ENCODE measurements at regions of chr1 and their contacts with region 1.

Region 1: GRCh38 chr1:67489643-67490042 is 59.4 kb upstream of the SERBP1 start:
- DNase-seq: peak; percentile 36
- ATAC-seq: peak; percentile 96
- H3K4me3 ChIP-seq: no peak overlapping the region
- H3K27ac ChIP-seq: no peak overlapping the region
- H3K4me1 ChIP-seq: no peaks in the 10 kb centered on the region
- H3K27me3 ChIP-seq: no peaks in the 10 kb centered on the region; a peak in 1 of 5 replicates
- CTCF ChIP-seq: peak; percentile 63
- EP300 ChIP-seq: no peak
- POLR2A ChIP-seq: no peak
- RAD21 ChIP-seq: no peak

Region 2: DNA sequence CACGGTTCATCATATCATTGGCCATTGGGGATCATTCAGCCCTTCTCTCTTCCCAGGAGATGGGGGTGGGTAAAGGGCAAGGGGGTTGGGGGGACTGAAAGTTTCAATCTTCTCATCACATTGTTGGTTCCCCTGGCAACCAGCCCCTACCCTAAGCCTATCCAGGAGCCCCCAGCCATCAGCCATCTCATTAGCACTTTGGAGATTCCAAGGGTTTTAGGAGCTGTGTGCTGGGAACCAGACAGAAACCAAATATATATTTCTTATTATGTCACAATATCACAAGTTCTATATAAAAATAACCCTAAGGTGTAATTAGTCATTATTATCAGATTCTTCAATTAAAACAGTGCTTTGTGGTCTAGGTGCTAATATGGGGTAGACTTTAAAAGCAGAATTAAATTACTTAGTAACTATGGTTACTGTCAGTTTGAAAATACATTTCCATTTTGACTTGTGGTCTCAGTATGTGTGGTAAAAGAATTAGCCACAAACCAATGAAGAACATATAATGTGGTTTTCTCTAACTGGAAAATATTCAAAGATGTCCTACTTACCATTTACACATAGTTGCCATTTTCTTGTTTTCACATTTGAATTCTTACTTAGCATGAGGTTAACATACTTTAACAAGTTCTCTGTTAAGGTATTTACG is 295.3 kb before region 1 on chr1:
- CTCF ChIA-PET with region 1: no interaction called
- POLR2A ChIA-PET with region 1: no interaction called
- in situ Hi-C with region 1: no loop called
- intact Hi-C with region 1: no loop called
- DNase-seq: no peak
- ATAC-seq: no peak
- H3K4me3 ChIP-seq: no peak overlapping the region
- H3K27ac ChIP-seq: no peak overlapping the region
- H3K4me1 ChIP-seq: no peaks in the 10 kb centered on the region
- H3K27me3 ChIP-seq: no peaks in the 10 kb centered on the region
- CTCF ChIP-seq: no peak
- EP300 ChIP-seq: no peak
- POLR2A ChIP-seq: no peak
- RAD21 ChIP-seq: no peak

Region 3: DNA sequence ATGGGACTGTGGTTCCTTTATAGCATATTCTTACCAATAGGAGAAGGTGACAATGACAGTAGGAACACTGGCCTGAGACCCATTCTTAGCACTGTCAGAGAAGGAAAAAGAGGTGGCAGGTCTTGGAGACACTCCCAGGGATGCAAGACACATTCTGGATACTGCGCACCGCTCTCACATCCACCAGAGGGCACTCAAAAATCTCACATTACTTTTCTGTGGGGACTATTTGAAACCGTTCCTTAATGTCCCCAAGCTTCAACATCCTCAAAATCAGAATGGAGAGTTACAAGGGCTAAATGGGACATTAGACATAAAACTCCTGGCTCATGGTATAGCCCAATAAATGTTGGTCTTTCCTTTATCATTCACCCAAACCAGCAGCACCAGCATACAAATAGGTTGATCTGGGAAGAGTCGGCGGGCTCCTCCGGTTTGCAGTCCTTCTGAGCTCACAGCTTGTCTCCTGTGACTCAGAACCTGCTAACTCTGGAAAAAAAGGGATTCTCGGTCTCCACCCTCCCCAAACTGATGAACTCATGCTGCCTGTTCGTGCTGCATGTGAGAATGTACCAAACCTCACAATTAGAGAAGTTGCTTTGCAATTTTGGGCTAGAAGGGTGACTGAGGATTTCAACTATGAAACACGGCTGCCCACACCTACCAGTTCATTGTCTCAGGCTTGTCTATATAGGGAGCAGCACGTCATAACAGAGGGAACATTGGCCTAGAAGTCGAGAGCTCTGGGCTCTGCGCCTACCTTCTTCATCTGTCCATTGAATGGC is 141.8 kb before region 1 on chr1:
- CTCF ChIA-PET with region 1: interaction called, 7 read pairs
- POLR2A ChIA-PET with region 1: no interaction called
- in situ Hi-C with region 1: no loop called
- intact Hi-C with region 1: loop called (anchors 1 kb)
- DNase-seq: peak; percentile 24
- ATAC-seq: peak; percentile 90
- H3K4me3 ChIP-seq: no peak overlapping the region
- H3K27ac ChIP-seq: no peak overlapping the region
- H3K4me1 ChIP-seq: no peaks in the 10 kb centered on the region
- H3K27me3 ChIP-seq: no peaks in the 10 kb centered on the region
- CTCF ChIP-seq: peak; percentile 79
- EP300 ChIP-seq: no peak
- POLR2A ChIP-seq: no peak
- RAD21 ChIP-seq: peak; percentile 45; the same call in 1 of the 2 replicates